Spleen (tissue), 13 donors: ENCODE measurements at regions of chr1 and their contacts with region 1.

Region 1: GRCh38 chr1:184805667-184806295 is 51.1 kb upstream of the EDEM3 start:
- DNase-seq: peak; percentile 94
- H3K4me3 ChIP-seq: peak overlapping the region in 1 of 8 donors; percentile 35
- H3K27ac ChIP-seq: peak overlapping the region in 7 of 8 donors; percentile 41 to 92 (median 82)
- H3K4me1 ChIP-seq: peaks cover 0 to 20% (median 12%) of the 10 kb centered on the region in 6 donors
- H3K27me3 ChIP-seq: no peaks in the 10 kb centered on the region
- CTCF ChIP-seq: peak; percentile 89 to 97 (median 94)
- POLR2A ChIP-seq: no peak

Region 2: GRCh38 chr1:184982002-184982954 is 176.5 kb after region 1 on chr1:
- intact Hi-C with region 1: loop called (anchors 5 kb)
- DNase-seq: peak; percentile 92
- H3K4me3 ChIP-seq: no peak overlapping the region
- H3K27ac ChIP-seq: peak overlapping the region in 1 of 8 donors; percentile 22
- H3K4me1 ChIP-seq: peaks cover 0 to 10% (median 3%) of the 10 kb centered on the region in 6 donors
- H3K27me3 ChIP-seq: peaks cover 0 to 11% (median 0%) of the 10 kb centered on the region in 7 donors
- CTCF ChIP-seq: peak; percentile 70 to 93 (median 88)
- POLR2A ChIP-seq: no peak

Region 3: GRCh38 chr1:185170291-185170848 is 364.6 kb after region 1 on chr1:
- intact Hi-C with region 1: loop called (anchors 5 kb)
- DNase-seq: no peak
- H3K4me3 ChIP-seq: no peak overlapping the region
- H3K27ac ChIP-seq: no peak overlapping the region
- H3K4me1 ChIP-seq: peaks cover 0 to 7% (median 0%) of the 10 kb centered on the region in 6 donors
- H3K27me3 ChIP-seq: no peaks in the 10 kb centered on the region
- CTCF ChIP-seq: peak in 10 of 11 experiments; percentile 28 to 68 (median 58)
- POLR2A ChIP-seq: no peak

Region 4: DNA sequence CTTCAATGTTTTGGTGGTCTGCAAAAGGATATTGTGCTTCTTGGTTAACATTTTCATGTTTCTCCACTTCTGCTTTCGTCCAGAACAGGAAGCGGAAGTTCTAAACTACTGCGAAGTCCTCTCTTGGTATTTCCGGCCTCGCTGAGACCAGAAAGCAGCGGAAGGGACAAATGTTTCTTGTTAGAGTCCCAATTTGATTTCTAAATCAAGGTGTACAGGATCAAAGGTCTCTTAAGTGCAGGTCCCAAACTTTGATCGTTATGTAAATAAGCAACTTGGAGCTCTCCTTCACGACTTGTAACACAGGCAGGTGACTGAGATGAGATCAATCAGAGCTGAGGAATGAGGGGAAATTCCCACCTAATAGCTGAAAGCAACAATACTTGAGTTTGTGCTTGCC is 888.3 kb after region 1 on chr1:
- intact Hi-C with region 1: loop called (anchors 10 kb)
- DNase-seq: no peak
- H3K4me3 ChIP-seq: peak overlapping the region in 6 of 8 donors; percentile 6 to 61 (median 20)
- H3K27ac ChIP-seq: peak overlapping the region; percentile 69 to 89 (median 84)
- H3K4me1 ChIP-seq: peaks cover 8 to 25% (median 14%) of the 10 kb centered on the region in 6 donors
- H3K27me3 ChIP-seq: no peaks in the 10 kb centered on the region
- CTCF ChIP-seq: no peak
- POLR2A ChIP-seq: no peak